H1 (cell line): ENCODE measurements at regions of chr14 and their contacts with region 1.

Region 1: GRCh38 chr14:85607651-85608081 is 77.7 kb downstream of the FLRT2 start:
- DNase-seq: no peak
- H3K4me3 ChIP-seq: no peak overlapping the region
- H3K27ac ChIP-seq: no peak overlapping the region
- H3K4me1 ChIP-seq: no peaks in the 10 kb centered on the region
- H3K27me3 ChIP-seq: no peaks in the 10 kb centered on the region
- CTCF ChIP-seq: no peak
- EP300 ChIP-seq: no peak
- POLR2A ChIP-seq: no peak
- RAD21 ChIP-seq: no peak

Region 2: GRCh38 chr14:85528080-85528896 is 79.4 kb before region 1 on chr14:
- CTCF ChIA-PET with region 1: interaction called, 11 read pairs
- POLR2A ChIA-PET with region 1: no interaction called
- DNase-seq: no peak
- H3K4me3 ChIP-seq: peak overlapping the region; percentile 53 to 76 (median 68)
- H3K27ac ChIP-seq: no peak overlapping the region
- H3K4me1 ChIP-seq: peaks cover 7 to 25% (median 9%) of the 10 kb centered on the region in 4 experiments; a peak in 6 of 7 replicates
- H3K27me3 ChIP-seq: peaks cover 25 to 48% (median 41%) of the 10 kb centered on the region in 4 experiments
- CTCF ChIP-seq: peak; percentile 26 to 64 (median 60)
- EP300 ChIP-seq: no peak
- POLR2A ChIP-seq: no peak
- RAD21 ChIP-seq: peak; percentile 87 to 89

Region 3: GRCh38 chr14:85549697-85550096 is 58.0 kb before region 1 on chr14:
- CTCF ChIA-PET with region 1: interaction called, 11 read pairs
- POLR2A ChIA-PET with region 1: no interaction called
- DNase-seq: no peak
- H3K4me3 ChIP-seq: no peak overlapping the region
- H3K27ac ChIP-seq: no peak overlapping the region
- H3K4me1 ChIP-seq: peaks cover 0 to 7% (median 3%) of the 10 kb centered on the region in 4 experiments; a peak in 3 of 7 replicates
- H3K27me3 ChIP-seq: no peaks in the 10 kb centered on the region
- CTCF ChIP-seq: no peak
- EP300 ChIP-seq: no peak
- POLR2A ChIP-seq: no peak
- RAD21 ChIP-seq: no peak

Region 4: GRCh38 chr14:85587151-85587711 is 20.4 kb before region 1 on chr14:
- CTCF ChIA-PET with region 1: interaction called, 18 read pairs
- POLR2A ChIA-PET with region 1: no interaction called
- DNase-seq: no peak
- H3K4me3 ChIP-seq: no peak overlapping the region
- H3K27ac ChIP-seq: no peak overlapping the region
- H3K4me1 ChIP-seq: peaks cover 0 to 3% (median 0%) of the 10 kb centered on the region in 4 experiments; a peak in 1 of 7 replicates
- H3K27me3 ChIP-seq: no peaks in the 10 kb centered on the region
- CTCF ChIP-seq: no peak
- EP300 ChIP-seq: no peak
- POLR2A ChIP-seq: no peak
- RAD21 ChIP-seq: no peak